ENCODE measurements at regions of chr10 and their contacts with region 1.

Region 1: GRCh38 chr10:121644501-121644900 is 46.3 kb upstream of the FGFR2 start:
- DNase-seq: no peak
- H3K27ac ChIP-seq: no peak overlapping the region
- CTCF ChIP-seq: no peak

Region 2: GRCh38 chr10:121627821-121628581 is 16.5 kb before region 1 on chr10:
- CTCF ChIA-PET with region 1: no interaction called
- POLR2A ChIA-PET with region 1: interaction called, 10 read pairs
- DNase-seq: peak; percentile 41
- H3K27ac ChIP-seq: peak overlapping the region; percentile 58
- CTCF ChIP-seq: no peak

Measured in RWPE1 (cell line).